Psoas muscle (tissue), 8 donors: ENCODE measurements at regions of chr17 and their contacts with region 1.

Region 1: GRCh38 chr17:72539981-72540897 is 419.4 kb downstream of the SOX9 start:
- DNase-seq: peak; percentile 66 to 81
- ATAC-seq: peak; percentile 94 to 98 (median 96)
- H3K4me3 ChIP-seq: no peak overlapping the region
- H3K27ac ChIP-seq: no peak overlapping the region
- H3K4me1 ChIP-seq: no peaks in the 10 kb centered on the region
- H3K27me3 ChIP-seq: no peaks in the 10 kb centered on the region
- CTCF ChIP-seq: peak; percentile 98

Region 2: GRCh38 chr17:70636517-70637133 is 1903.6 kb before region 1 on chr17:
- intact Hi-C with region 1: loop called (anchors 2 kb)
- DNase-seq: no peak
- ATAC-seq: no peak
- H3K4me3 ChIP-seq: no peak overlapping the region
- H3K27ac ChIP-seq: no peak overlapping the region
- H3K4me1 ChIP-seq: no peaks in the 10 kb centered on the region
- H3K27me3 ChIP-seq: no peaks in the 10 kb centered on the region
- CTCF ChIP-seq: peak; percentile 80

Region 3: GRCh38 chr17:70767102-70767701 is 1773.0 kb before region 1 on chr17:
- intact Hi-C with region 1: loop called in 1 of 2 experiments (anchors 10 kb)
- DNase-seq: no peak
- ATAC-seq: no peak
- H3K4me3 ChIP-seq: no peak overlapping the region
- H3K27ac ChIP-seq: no peak overlapping the region
- H3K4me1 ChIP-seq: no peaks in the 10 kb centered on the region
- H3K27me3 ChIP-seq: no peaks in the 10 kb centered on the region
- CTCF ChIP-seq: peak; percentile 38

Region 4: GRCh38 chr17:71118039-71118438 is 1422.2 kb before region 1 on chr17:
- intact Hi-C with region 1: loop called (anchors 10 kb)
- DNase-seq: no peak
- ATAC-seq: no peak
- H3K4me3 ChIP-seq: no peak overlapping the region
- H3K27ac ChIP-seq: no peak overlapping the region
- H3K4me1 ChIP-seq: no peaks in the 10 kb centered on the region
- H3K27me3 ChIP-seq: no peaks in the 10 kb centered on the region
- CTCF ChIP-seq: peak; percentile 47

Region 5: DNA sequence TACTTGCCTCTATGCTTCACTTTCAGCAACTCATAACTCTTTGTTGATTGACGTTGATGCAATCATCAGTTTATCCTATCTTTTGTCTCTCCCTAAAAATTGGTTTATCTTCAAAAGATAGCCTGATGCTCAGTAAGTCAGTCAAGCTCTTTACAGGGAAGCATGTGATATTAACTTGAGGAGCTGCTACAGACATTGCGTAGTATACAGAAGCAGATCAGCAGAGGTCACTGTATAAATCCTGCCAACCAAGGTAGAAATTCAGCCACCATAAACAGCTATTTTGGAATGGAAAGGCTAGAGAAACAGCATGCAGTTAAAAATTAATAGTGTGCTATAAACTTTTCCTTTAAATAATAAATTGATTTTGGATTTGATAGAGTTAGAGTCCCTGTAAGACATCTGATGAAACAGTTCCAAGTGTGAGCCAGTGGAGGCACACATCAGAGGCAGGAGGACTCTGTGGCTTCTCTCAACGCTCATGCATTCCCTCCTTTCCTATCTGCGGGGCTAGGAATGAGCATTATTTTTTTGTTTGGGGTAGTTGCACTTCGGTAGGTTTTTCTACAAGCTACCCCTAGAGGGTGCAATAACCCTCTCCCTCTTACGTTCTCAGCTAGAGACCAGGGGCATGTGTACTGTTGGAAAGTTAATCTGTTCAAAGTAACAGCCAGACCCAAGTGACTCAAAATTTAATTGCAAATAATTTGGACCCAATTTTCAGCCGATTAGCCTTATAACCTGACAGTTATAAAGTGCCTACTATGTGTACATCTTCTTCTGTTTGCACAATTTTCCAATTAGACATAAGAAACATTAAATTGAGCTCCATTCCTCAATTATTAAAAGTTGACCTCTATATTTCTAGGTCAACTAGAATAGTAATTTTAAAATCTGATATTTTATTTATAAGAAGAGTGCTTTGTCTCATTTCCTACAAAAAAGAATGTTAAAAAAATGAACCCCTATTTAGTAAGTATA is 1067.1 kb before region 1 on chr17:
- intact Hi-C with region 1: loop called (anchors 5 to 10 kb)
- DNase-seq: no peak
- ATAC-seq: peak; percentile 58 to 67 (median 64)
- H3K4me3 ChIP-seq: no peak overlapping the region
- H3K27ac ChIP-seq: no peak overlapping the region
- H3K4me1 ChIP-seq: no peaks in the 10 kb centered on the region
- H3K27me3 ChIP-seq: no peaks in the 10 kb centered on the region
- CTCF ChIP-seq: peak; percentile 57

Region 6: DNA sequence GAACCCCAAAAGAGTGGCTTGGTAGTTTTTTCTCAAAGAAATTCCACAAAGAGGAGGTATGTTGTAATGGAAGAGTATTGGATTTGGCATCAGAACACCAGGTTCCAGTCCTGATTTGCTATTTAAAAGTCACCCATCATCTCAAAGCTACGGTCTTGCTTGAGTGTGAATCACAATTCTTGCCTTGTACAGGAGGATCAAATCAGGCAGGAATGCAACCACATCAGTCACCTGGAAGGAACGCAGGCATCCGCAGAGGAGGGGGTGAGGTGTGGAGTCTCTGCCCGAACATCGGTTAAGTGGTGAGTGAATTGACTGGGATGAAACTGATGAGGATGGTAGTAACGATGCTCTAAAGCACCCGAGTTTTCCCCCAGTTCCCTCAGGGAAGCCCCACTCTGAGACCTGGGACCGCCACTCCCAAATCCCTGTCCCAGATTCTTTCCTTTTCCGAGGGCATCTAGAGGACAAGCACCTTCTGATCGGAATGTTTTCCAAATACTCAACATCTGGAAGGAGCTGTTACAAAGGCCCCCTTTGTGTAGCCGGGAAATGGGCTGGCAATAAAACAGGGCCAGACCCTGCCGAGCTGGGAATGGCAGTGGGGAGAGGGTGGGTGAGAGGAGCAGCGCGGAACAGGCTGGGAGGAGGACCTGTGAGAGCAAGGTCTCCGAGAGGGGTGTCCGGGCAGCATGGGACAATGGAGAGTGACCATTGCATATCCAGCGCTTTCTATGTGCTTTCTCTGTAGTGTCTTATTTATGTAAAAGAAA is 82.6 kb after region 1 on chr17:
- intact Hi-C with region 1: no loop called
- DNase-seq: no peak
- ATAC-seq: no peak
- H3K4me3 ChIP-seq: no peak overlapping the region
- H3K27ac ChIP-seq: no peak overlapping the region
- H3K4me1 ChIP-seq: no peaks in the 10 kb centered on the region
- H3K27me3 ChIP-seq: peaks cover 0 to 27% (median 17%) of the 10 kb centered on the region in 3 donors
- CTCF ChIP-seq: no peak